Caco-2 (cell line): ENCODE measurements at regions of chr16 and their contacts with region 1.

Region 1: DNA sequence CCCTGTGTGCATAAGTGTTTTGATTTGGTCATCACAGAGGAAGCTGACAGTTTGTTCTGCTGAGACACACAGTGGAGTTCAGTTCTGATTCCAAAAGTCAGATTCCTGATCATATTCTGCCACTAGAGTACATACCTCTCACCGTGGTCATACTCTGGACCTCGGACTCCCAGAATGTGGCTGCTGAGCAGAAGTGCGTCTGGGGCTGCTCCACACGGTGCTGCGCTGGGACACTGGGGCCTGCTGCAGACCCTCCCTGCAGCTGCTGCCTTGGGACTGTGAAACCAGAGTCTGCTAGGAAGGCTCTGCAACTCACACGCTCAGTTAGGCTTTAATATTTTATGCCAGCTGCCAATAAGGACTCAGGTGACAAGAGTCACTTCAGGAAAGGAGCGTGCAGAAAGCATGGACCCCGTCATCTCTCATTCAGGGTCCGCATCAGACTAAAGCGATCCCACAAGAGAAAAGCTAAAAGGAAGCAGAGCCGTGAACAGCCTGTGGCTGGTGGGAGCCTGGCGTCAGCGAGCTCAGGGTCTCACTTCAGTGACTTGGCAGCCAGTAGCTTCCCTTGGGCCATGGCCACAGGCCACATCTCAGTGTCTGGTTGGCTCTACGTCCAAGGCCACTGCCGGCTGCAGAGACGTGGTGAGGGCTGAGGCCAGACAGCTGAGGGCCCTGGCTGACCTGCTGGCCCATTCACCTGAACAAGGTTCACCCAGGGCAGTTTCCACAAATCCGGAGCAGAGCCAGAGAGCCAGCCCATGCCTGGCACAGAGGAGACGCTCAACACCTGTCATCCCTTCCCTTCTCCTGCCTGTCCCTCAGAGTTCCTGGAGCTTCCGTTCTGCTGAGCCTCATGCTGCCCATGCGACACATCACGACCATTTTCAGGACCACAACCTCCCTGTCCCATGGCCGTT is 24.7 kb upstream of the KIFC3 start:
- DNase-seq: peak; percentile 69 to 78
- H3K4me3 ChIP-seq: no peak overlapping the region
- H3K4me3 Mint-ChIP-seq: no peak overlapping the region
- H3K27ac Mint-ChIP-seq: peak overlapping the region; percentile 86
- H3K4me1 ChIP-seq: peaks cover 67% of the 10 kb centered on the region
- H3K4me1 Mint-ChIP-seq: peaks cover 52% of the 10 kb centered on the region
- H3K27me3 ChIP-seq: no peaks in the 10 kb centered on the region
- H3K27me3 Mint-ChIP-seq: no peaks in the 10 kb centered on the region
- CTCF ChIP-seq: no peak

Region 2: GRCh38 chr16:57720142-57720575 is 106.8 kb before region 1 on chr16:
- CTCF ChIA-PET with region 1: no interaction called
- POLR2A ChIA-PET with region 1: no interaction called
- intact Hi-C with region 1: no loop called
- DNase-seq: peak; percentile 80 to 90
- H3K4me3 ChIP-seq: no peak overlapping the region
- H3K4me3 Mint-ChIP-seq: no peak overlapping the region
- H3K27ac Mint-ChIP-seq: no peak overlapping the region
- H3K4me1 ChIP-seq: no peaks in the 10 kb centered on the region
- H3K4me1 Mint-ChIP-seq: no peaks in the 10 kb centered on the region
- H3K27me3 ChIP-seq: no peaks in the 10 kb centered on the region
- H3K27me3 Mint-ChIP-seq: no peaks in the 10 kb centered on the region
- CTCF ChIP-seq: peak; percentile 80 to 95

Region 3: DNA sequence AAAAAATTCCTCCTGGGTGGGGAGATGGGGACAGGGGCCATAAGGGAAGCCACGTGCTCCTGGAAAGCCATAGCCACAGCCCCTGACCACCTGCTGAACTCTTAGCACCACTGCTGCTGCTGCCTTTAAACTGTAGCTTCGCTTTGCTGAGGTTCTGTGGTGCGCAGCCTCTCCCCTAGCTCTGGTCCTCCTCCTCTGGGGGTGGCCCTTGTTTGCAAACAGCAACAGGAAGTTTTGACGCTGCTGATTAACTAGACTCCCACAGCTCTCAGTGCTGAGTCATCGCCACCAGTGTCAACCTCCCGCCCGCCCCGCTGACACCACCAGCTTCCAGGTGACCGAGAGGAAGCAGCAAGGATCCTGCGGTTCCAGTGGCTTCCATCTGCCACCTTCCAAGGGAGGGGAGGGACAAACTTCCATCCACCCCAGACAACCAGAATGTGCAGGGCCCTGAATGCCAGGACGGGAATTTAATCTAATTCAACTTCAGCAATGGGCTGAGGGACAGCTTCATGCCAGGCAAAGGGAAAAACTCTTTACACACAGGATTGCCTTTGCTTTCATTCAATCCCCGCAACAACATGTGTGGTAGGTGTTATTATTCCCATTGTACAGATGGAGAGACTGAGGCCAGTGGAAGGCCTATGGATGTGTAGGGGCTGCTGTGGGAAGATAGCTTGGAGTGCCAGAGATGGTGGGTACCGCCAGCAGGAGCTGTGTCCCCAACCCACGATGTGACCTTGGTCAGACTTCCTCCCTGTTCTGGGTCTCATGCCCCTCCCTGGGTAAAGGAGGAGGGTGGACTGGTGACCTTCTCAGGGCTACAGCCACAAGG is 16.6 kb before region 1 on chr16:
- CTCF ChIA-PET with region 1: interaction called, 4 read pairs
- POLR2A ChIA-PET with region 1: interaction called, 8 read pairs
- intact Hi-C with region 1: loop called (anchors 1 kb)
- DNase-seq: peak; percentile 92 to 97
- H3K4me3 ChIP-seq: no peak overlapping the region
- H3K4me3 Mint-ChIP-seq: peak overlapping the region; percentile 51
- H3K27ac Mint-ChIP-seq: peak overlapping the region; percentile 93
- H3K4me1 ChIP-seq: peaks cover 86% of the 10 kb centered on the region
- H3K4me1 Mint-ChIP-seq: peaks cover 73% of the 10 kb centered on the region
- H3K27me3 ChIP-seq: no peaks in the 10 kb centered on the region
- H3K27me3 Mint-ChIP-seq: no peaks in the 10 kb centered on the region
- CTCF ChIP-seq: no peak

Region 4: DNA sequence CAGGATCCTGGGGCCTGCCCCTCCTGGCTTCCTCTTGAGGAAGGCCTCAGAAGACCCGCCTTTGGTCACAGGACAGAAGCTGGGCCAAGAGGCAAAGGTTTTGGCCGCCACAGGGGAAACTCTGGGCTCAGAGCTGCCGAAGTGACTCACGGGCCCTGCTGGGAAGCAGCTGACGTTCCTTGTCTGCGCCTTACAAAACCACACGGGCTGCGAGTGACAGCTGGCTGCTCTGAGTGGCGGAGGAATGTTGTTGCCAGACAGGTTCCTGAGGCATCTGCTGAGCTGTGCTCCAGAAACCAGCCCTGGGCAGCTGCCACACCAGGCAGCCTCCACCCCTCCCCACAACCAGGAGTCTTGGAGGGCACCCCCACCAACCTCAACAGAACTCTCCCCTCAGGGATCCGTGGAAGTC is 10.6 kb before region 1 on chr16:
- CTCF ChIA-PET with region 1: no interaction called
- POLR2A ChIA-PET with region 1: interaction called, 3 read pairs
- intact Hi-C with region 1: loop called (anchors 1 kb)
- DNase-seq: peak; percentile 94 to 96
- H3K4me3 ChIP-seq: no peak overlapping the region
- H3K4me3 Mint-ChIP-seq: peak overlapping the region; percentile 66
- H3K27ac Mint-ChIP-seq: peak overlapping the region; percentile 98
- H3K4me1 ChIP-seq: peaks cover 83% of the 10 kb centered on the region
- H3K4me1 Mint-ChIP-seq: peaks cover 69% of the 10 kb centered on the region
- H3K27me3 ChIP-seq: no peaks in the 10 kb centered on the region
- H3K27me3 Mint-ChIP-seq: no peaks in the 10 kb centered on the region
- CTCF ChIP-seq: no peak